Activated T-helper 1 cell treated with anti-CD3 and anti-CD28 coated beads, Interleukin-12 subunit alpha, Interleukin-12 subunit beta, Interleukin-2, Interleukin-4 antibody, amounts not matched to agents 30 ng/mL and 10 ng/mL and 1 ng/mL, durations not matched to agents 14 hours and 24 hours and 36 hours (primary cell): ENCODE measurements at regions of chr6 and their contacts with region 1.

Region 1: GRCh38 chr6:53718597-53719460 is 53.3 kb upstream of the KLHL31 start:
- DNase-seq: peak; percentile 27
- H3K4me3 Mint-ChIP-seq: no peak overlapping the region
- H3K27ac Mint-ChIP-seq: no peak overlapping the region
- H3K4me1 Mint-ChIP-seq: peaks cover 6% of the 10 kb centered on the region
- H3K27me3 Mint-ChIP-seq: peaks cover 34% of the 10 kb centered on the region

Region 2: GRCh38 chr6:53658992-53659391 is 59.8 kb before region 1 on chr6:
- intact Hi-C with region 1: no loop called
- DNase-seq: no peak
- H3K4me3 Mint-ChIP-seq: no peak overlapping the region
- H3K27ac Mint-ChIP-seq: no peak overlapping the region
- H3K4me1 Mint-ChIP-seq: no peaks in the 10 kb centered on the region
- H3K27me3 Mint-ChIP-seq: peaks cover 43% of the 10 kb centered on the region

Region 3: DNA sequence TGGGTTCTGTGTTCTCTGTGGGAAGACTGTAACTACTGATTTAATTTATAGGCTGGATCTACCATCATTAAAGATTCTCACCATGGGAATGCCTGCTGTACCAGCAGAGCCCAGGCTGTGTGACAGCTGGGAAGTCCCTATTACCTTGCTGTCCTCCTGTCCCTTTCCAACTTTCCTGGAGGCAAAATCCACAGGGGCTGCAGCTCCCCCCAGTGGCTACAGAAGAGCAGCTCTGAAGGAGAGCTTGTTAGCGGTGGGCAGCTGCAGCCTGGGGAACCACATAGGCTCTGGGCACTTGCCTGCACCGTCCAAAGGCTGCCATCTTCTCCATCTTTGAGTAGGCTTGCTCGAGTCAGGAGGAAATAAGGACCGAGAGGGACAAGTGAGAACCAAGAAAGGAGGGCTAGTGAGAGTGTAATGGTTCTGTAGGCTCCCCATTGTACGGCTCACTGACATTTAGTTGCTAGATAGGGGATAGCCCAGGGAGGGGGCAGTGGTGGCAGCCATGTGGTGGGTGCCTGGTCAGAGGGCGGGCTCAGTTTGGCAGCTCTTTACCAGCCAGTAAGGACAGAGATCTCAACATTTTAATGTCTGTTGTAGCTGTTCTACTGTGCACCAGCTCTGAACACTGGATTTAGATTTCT is 237.4 kb after region 1 on chr6:
- intact Hi-C with region 1: loop called (anchors 2 kb)
- DNase-seq: no peak
- H3K4me3 Mint-ChIP-seq: no peak overlapping the region
- H3K27ac Mint-ChIP-seq: no peak overlapping the region
- H3K4me1 Mint-ChIP-seq: no peaks in the 10 kb centered on the region
- H3K27me3 Mint-ChIP-seq: peaks cover 2% of the 10 kb centered on the region